Aorta (tissue), 5 donors: ENCODE measurements at regions of chr22 and their contacts with region 1.

Region 1: GRCh38 chr22:39532215-39533071 is at the start of gene RPS19BP1:
- DNase-seq: peak; percentile 99 to 100
- ATAC-seq: peak; percentile 93
- H3K4me3 ChIP-seq: peak within 1 kb of the TSS; percentile 64 to 83
- H3K27ac ChIP-seq: peak within 1 kb of the TSS in 1 of 2 donors; percentile 61
- H3K4me1 ChIP-seq: no peaks in the 10 kb centered on the region
- H3K27me3 ChIP-seq: no peaks in the 10 kb centered on the region
- total RNA-seq, gene RPS19BP1: 50.4 to 51.8 TPM

Region 2: DNA sequence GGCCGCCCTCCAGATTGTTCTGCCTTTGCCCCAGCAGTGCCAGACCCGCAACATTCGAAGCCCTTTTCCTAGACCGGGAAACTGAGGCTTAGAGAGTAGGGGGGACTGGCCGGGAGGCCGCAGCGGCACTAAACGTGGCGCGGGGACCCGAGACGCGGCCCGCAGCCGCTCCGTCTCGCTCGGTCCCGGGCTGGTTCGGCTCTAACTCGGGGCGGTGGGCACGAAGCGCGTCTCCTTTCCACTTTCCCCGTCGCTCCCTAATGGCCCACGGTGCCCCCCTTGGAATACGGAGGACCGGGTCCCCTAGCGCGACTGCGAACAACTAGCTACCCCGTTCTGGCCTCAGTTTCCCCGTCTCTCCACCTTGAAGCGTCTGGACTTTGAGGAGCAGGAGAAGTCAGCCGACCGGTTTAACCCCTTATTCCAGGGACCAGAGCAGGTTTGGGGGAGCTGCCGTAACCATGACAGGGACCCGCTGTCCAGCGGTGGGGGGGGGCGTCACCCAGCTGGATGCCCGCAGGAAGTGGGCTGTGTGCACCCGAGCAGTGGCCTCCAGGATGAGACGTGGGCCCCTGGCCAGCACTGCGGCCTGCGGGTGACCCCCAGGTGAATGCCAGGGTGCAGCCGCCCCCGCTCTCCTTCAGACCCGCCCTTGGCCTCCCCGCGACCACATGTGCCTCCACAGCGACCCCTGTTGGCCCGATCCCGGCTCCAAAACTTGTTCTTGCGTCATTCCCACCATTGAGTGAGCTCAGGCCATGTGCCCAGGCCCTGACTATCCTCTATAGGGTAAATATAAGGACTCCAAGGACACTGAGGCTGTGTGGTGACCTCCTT is 1971.0 kb before region 1 on chr22:
- intact Hi-C with region 1: loop called in 1 of 2 experiments (anchors 5 kb)
- DNase-seq: peak; percentile 95 to 99
- ATAC-seq: peak; percentile 87
- H3K4me3 ChIP-seq: peak overlapping the region; percentile 86 to 97
- H3K27ac ChIP-seq: peak overlapping the region; percentile 91 to 97
- H3K4me1 ChIP-seq: peaks cover 0 to 5% of the 10 kb centered on the region in 2 donors
- H3K27me3 ChIP-seq: no peaks in the 10 kb centered on the region

Region 3: DNA sequence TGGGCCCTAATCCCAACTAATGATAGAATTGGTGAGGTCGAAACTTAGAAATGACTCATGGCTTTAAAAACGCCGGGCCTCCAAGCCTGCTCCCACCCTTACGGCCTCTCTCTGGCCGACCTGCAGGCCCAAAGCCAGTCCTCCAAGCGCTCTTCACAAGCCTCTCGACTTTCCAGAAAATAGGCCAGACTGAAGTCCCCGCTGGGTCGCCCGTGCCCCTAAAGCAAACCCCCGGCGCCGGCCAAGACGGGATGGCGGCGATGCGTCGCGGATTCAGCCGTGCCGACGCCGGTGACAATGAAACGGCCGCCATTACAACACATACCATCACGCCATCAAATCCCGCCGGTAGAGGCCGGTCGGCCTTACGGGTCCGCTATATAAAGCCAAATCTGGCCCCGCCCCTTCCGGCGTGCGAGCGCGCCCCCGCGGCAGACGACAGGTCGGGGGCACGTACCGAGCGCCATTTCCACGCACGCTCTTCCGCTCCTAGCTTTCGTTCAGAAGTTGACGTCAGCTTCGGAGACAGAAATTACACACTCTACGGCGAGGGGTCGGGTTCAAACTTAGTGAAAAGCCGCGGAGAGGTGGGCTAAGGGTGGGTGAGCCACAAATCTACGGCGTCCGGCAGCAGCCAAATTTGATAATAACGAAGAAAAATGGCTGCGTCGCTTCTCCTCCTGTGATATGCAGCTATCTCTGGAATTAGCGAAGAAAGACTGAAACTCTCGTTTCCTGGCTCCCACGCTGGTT is 213.0 kb before region 1 on chr22 and contains the start of gene RPL3:
- intact Hi-C with region 1: loop called (anchors 2 to 10 kb)
- DNase-seq: peak; percentile 97 to 99
- ATAC-seq: peak; percentile 97
- H3K4me3 ChIP-seq: peak within 1 kb of the TSS; percentile 50 to 89
- H3K27ac ChIP-seq: peak within 1 kb of the TSS; percentile 57 to 94
- H3K4me1 ChIP-seq: no peaks in the 10 kb centered on the region
- H3K27me3 ChIP-seq: no peaks in the 10 kb centered on the region
- total RNA-seq, gene RPL3: 1,469 to 1,615 TPM

Region 4: DNA sequence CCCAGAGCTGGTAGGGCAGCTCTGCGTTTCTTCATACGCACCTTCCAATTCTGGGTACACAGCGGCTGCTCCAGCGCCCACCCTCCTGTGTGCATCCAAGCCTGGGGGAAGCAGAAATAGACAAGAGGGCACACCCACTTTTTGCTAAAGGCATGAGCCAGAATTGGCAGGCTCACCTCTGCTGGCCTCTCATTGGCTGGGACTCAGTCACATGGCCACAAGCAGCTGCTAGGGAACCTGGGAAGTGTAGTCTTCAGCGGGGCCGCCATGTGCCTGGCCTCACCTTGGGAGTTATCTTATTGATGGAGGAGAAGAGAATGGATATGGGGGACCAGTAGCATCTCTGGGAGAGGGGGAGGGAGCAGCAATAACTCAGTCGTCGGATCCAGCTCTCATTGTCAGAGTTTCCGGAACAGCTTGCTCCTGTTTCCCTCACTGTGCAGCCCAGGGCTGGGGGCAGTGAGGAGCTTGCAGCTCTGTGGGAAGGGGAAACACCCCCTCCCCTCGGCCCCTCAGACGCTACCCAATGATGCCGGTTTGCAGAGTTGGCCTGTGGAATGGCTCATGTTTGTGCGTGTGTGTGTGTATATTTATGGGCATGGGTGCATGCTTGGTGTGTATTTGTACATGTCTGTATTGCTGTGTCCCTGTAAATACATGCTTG is 42.2 kb before region 1 on chr22:
- intact Hi-C with region 1: loop called in 1 of 2 experiments (anchors 1 kb)
- DNase-seq: peak; percentile 90 to 91
- ATAC-seq: peak; percentile 83
- H3K4me3 ChIP-seq: no peak overlapping the region
- H3K27ac ChIP-seq: no peak overlapping the region
- H3K4me1 ChIP-seq: no peaks in the 10 kb centered on the region
- H3K27me3 ChIP-seq: no peaks in the 10 kb centered on the region

Region 5: GRCh38 chr22:40346178-40347118 is 814.0 kb after region 1 on chr22 and contains the start of gene ADSL:
- intact Hi-C with region 1: loop called (anchors 5 to 10 kb)
- DNase-seq: peak; percentile 93 to 97
- ATAC-seq: peak; percentile 98
- H3K4me3 ChIP-seq: peak within 1 kb of the TSS; percentile 34 to 42
- H3K27ac ChIP-seq: peak within 1 kb of the TSS; percentile 6 to 35
- H3K4me1 ChIP-seq: peaks cover 3% of the 10 kb centered on the region in 2 donors
- H3K27me3 ChIP-seq: no peaks in the 10 kb centered on the region
- total RNA-seq, gene ADSL: 40.5 to 49.0 TPM